H1 (cell line): ENCODE measurements at regions of chr2 and their contacts with region 1.

Region 1: GRCh38 chr2:218659258-218659987 is at the starts of genes BCS1L and ZNF142:
- DNase-seq: peak; percentile 62 to 97
- H3K4me3 ChIP-seq: peak within 1 kb of the TSS; percentile 84 to 95 (median 86)
- H3K27ac ChIP-seq: peak within 1 kb of the TSS; percentile 48; the same call in 1 of the 2 replicates
- H3K4me1 ChIP-seq: peaks cover 0 to 5% (median under 1%) of the 10 kb centered on the region in 4 experiments; a peak in 2 of 7 replicates
- H3K27me3 ChIP-seq: no peaks in the 10 kb centered on the region
- CTCF ChIP-seq: 0 out of 4 replicates have a peak, but pooled peaks of 1 of the 3 experiments have one; percentile 7
- EP300 ChIP-seq: peak in 1 of 2 experiments; percentile 54; a peak in 1 of 3 replicates
- POLR2A ChIP-seq: peak; percentile 50 to 52; a peak in 2 of 3 replicates
- RAD21 ChIP-seq: no peak
- total RNA-seq, gene BCS1L: 22.0 and 23.7 TPM in 2 replicates
- total RNA-seq, gene ZNF142: 32.5 and 37.9 TPM in 2 replicates

Region 2: DNA sequence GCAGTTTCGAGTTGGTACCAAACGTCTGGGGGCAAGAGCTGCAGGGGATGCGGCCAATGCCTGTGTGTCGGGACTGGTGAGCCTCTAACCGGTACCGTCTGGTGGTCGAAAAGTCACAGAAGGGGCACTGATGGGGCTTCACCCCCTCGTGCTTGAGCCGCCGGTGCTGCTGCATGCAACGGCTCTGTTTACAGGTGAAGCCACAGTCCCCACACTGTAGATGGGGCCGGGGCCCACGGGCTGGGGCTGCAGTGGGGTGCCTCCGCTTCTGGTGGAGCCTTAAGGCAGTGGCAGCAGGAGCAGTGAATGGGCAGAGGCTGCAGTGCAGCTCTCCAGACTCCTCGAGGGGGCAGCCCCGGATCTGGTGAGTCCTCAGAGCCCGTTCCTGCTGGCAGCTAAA is 16.6 kb before region 1 on chr2:
- CTCF ChIA-PET with region 1: interaction called, 48 read pairs
- POLR2A ChIA-PET with region 1: interaction called, 16 read pairs
- DNase-seq: no peak
- H3K4me3 ChIP-seq: no peak overlapping the region
- H3K27ac ChIP-seq: no peak overlapping the region
- H3K4me1 ChIP-seq: no peaks in the 10 kb centered on the region
- H3K27me3 ChIP-seq: no peaks in the 10 kb centered on the region
- CTCF ChIP-seq: no peak
- EP300 ChIP-seq: no peak
- POLR2A ChIP-seq: no peak
- RAD21 ChIP-seq: no peak

Region 3: DNA sequence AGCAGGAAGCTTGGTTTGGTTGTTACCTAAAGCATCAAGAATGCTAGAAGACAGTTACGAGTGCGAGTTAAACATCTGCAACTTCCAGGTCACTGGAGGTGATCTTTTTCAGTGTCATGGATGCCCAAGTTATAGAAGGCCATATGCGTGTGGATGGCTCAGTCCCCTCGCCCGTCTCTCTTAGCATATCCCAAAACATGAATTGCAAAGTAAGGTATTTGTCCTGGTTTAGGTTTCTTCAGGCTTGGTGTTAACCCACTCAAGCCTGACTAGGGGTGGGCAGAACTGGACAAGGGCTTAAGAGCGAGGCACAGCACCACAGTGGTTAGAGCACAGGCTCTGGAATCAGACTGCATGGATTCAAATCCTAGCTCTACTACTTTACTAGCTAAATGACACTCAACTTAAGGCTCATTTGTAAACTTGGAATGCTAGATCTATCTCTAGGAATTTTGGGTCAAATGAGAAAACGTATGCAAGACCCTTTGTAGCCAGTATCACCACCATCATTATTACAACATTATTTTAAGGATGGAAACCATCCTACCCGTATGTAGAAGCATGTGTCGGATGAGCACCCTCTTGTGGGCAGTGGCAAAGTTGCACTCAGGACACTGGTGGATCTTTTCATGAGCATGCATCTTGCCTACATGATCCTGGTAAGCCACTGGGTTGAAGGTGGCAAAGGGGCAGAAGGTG is 11.2 kb before region 1 on chr2:
- CTCF ChIA-PET with region 1: interaction called, 48 read pairs
- POLR2A ChIA-PET with region 1: interaction called, 16 read pairs
- DNase-seq: peak in 1 of 2 experiments; percentile 71
- H3K4me3 ChIP-seq: no peak overlapping the region
- H3K27ac ChIP-seq: no peak overlapping the region
- H3K4me1 ChIP-seq: no peaks in the 10 kb centered on the region
- H3K27me3 ChIP-seq: no peaks in the 10 kb centered on the region
- CTCF ChIP-seq: peak; percentile 73 to 97 (median 92)
- EP300 ChIP-seq: no peak
- POLR2A ChIP-seq: no peak
- RAD21 ChIP-seq: peak; percentile 82 to 83

Region 4: DNA sequence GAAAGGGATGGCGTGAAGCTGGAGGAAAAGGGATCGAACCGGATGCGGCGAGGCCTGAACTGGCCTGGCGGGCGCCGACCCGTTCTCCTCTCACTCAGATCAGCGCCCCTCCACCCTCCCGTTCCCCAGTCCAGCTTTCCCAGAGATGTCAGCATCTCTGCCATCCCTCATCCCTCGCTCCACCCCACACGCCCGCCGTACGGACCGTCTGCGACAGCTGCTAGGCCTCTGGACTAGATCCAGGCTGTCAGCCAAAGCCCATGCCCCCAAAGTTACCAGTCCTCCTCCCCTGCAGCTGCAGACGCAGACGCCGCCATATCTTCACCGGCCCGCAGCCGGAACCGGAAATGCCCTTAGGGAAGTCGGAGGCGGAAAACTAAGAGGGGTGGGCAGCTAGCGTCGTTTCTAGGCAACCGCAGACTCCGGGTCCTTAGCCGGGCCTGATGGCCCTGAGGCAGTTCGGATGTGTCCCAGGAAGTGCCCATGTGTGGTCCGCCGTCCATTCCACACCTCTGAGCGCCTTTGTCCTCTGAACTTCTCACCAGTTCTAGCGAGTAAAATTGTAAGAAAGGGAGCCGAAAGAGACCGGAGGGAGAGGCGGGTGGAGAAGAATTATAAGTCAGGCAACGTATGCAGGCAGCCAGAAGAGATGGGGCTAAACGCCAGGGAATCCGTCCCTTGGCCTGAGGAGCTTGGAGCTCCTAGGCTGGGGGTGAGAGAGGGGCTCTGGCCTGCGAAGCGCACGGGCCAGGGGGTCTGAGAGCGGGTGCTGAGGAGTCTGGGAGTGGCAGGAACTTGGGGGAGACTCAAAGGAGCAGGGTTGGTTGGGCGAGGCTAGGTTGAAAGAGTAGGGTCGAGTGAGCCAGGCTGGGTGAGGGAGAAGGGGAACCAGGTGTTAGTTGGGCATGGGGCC is 12.5 kb after region 1 on chr2 and contains the starts of genes RNF25 and STK36:
- CTCF ChIA-PET with region 1: interaction called, 45 read pairs
- POLR2A ChIA-PET with region 1: interaction called, 95 read pairs
- DNase-seq: peak; percentile 74 to 85
- H3K4me3 ChIP-seq: peak within 1 kb of the TSS; percentile 96 to 99 (median 96)
- H3K27ac ChIP-seq: peak within 1 kb of the TSS; percentile 86
- H3K4me1 ChIP-seq: peaks cover 0 to 4% (median 1%) of the 10 kb centered on the region in 4 experiments; a peak in 3 of 7 replicates
- H3K27me3 ChIP-seq: no peaks in the 10 kb centered on the region
- CTCF ChIP-seq: no peak
- EP300 ChIP-seq: no peak
- POLR2A ChIP-seq: peak; percentile 70 to 74
- RAD21 ChIP-seq: no peak
- total RNA-seq, gene RNF25: 19.6 and 24.7 TPM in 2 replicates
- total RNA-seq, gene STK36: 34.9 and 41.4 TPM in 2 replicates